ENCODE measurements at regions of chr12 and their contacts with region 1.

Region 1: DNA sequence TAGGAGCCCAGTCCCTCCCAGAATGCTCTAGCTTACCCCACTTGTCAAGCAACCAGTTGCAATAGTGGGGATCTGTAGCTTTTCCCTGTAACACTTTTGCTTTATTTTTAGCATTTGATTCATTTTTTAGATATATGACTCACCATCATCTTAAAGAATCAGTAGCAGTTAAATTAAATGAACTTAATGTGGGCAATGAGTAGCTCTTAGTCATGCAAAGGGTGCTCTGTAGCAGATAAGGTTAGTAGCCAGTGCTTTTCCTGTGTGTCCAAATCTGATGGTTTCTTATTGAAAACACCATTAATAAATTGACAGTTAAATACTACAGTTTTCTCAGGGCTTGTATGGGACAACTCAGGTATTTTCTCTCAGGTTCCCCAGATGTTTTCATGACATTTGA is 311.8 kb downstream of the RERGL start:
- DNase-seq: no peak
- H3K4me3 ChIP-seq: no peak overlapping the region
- H3K27ac ChIP-seq: no peak overlapping the region
- H3K27me3 ChIP-seq: no peaks in the 10 kb centered on the region
- CTCF ChIP-seq: no peak

Region 2: GRCh38 chr12:17866802-17867201 is 88.6 kb after region 1 on chr12:
- intact Hi-C with region 1: loop called in 1 of 2 experiments (anchors 2 kb)
- DNase-seq: no peak
- H3K4me3 ChIP-seq: no peak overlapping the region
- H3K27ac ChIP-seq: no peak overlapping the region
- H3K27me3 ChIP-seq: no peaks in the 10 kb centered on the region
- CTCF ChIP-seq: no peak

Region 3: DNA sequence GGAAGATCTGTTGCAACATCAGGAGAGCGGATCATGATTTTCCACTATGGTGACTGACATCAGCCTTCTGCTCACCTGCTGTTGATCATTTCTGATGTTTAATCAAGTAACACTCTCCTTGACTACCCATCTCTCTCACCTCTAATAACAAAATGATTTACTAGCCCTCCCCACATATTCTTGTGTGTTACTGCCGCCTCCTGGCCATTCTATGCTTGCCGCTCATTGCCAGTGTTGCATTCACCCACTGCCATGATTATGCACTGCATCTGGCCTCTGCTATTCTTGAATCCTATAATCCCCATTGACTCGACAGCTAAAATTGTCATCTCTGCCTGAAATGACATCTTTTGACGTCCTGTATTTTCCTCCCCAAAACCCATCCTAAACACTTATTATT is 198.0 kb after region 1 on chr12:
- intact Hi-C with region 1: no loop called
- DNase-seq: no peak
- H3K4me3 ChIP-seq: no peak overlapping the region
- H3K27ac ChIP-seq: no peak overlapping the region
- H3K27me3 ChIP-seq: peaks cover 0 to 2% (median 0%) of the 10 kb centered on the region in 45 donors
- CTCF ChIP-seq: no peak

Region 4: GRCh38 chr12:18355429-18355828 is 577.2 kb after region 1 on chr12:
- intact Hi-C with region 1: no loop called
- DNase-seq: no peak
- H3K4me3 ChIP-seq: no peak overlapping the region
- H3K27ac ChIP-seq: no peak overlapping the region
- H3K27me3 ChIP-seq: no peaks in the 10 kb centered on the region
- CTCF ChIP-seq: no peak

Region 5: DNA sequence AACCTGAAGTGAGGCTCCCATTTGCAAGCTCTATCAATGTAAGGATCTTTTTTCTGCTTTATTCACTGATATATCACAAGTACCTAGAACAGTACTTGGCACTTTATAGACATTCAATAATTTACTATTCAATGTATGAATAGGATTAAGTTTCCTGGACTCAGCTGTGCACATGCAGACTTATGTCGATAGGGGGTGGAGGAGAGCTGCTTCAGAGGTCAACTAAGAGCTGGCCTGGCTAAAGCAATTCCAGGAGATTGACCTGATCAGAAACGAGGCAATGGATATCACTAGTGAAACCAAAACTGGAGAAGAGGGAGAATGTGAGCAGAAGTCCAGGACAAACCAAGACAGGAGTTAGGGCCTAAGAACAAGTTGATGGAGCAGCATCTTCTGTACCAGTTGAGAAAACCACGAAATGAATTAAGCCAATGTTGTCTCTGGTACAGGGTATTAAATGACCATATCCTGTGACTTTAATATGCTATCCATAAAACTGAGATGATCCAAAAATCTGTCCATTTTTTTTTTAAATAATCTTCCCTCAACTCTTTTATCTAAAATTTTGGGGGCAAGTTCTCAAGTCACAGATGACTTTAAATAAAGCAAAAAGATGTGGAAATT is 652.3 kb after region 1 on chr12:
- intact Hi-C with region 1: no loop called
- DNase-seq: peak in 1 of 10 donors; percentile 12
- H3K4me3 ChIP-seq: no peak overlapping the region
- H3K27ac ChIP-seq: no peak overlapping the region
- H3K27me3 ChIP-seq: no peaks in the 10 kb centered on the region
- CTCF ChIP-seq: peak in 53 of 56 donors; percentile 33 to 71 (median 55)

Measured in dorsolateral prefrontal cortex (tissue), 120 donors.